HEK293T (cell line): ENCODE measurements at regions of chr20 and their contacts with region 1.

Region 1: DNA sequence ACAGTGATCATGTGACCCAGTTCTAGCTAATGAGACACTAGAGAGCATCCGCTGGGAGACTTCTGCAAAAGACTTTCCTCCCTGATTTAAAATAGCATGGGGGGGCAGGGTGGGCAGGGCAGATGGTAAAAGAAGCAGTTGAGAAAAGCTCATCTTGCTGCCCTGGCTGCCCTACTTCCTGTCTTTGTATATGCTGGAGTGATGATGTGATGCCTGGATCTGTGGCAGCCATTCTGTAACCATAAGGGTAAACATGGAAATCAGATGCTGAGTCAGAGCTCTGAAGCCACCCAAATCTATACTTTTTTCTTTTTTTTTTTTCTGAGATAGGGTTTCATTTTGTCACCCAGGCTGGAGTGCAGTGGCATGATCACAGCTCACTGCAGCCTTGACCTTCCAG is 25.4 kb downstream of the ZFP64 start:
- DNase-seq: no peak

Region 2: GRCh38 chr20:52154575-52154974 is 11.6 kb before region 1 on chr20:
- CTCF ChIA-PET with region 1: interaction called, 13 read pairs
- POLR2A ChIA-PET with region 1: no interaction called
- DNase-seq: no peak

Region 3: DNA sequence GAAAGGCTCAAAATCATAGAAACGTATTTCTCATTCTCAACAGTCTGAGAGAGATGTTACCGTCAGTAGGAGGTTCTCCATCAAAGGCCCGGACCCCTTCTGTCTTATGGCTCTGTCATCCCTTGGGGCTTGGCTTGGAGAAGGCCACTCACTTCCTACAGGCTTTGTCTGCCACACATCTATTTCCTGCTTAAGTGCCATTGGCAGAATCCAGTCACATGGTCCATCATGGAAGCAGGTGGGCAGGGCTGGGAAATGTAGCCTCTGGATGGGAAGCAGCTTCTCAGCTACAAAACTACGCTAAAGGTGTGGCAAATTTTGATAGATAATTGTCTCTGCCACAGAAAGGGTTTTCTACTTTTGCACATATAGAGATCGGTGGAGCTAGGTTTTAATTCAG is 38.0 kb after region 1 on chr20:
- CTCF ChIA-PET with region 1: no interaction called
- POLR2A ChIA-PET with region 1: no interaction called
- DNase-seq: no peak

Region 4: GRCh38 chr20:52425253-52425652 is 259.1 kb after region 1 on chr20:
- CTCF ChIA-PET with region 1: no interaction called
- POLR2A ChIA-PET with region 1: no interaction called
- DNase-seq: peak; percentile 15